ENCODE measurements at regions of chr4 and their contacts with region 1.

Region 1: GRCh38 chr4:44553143-44553542 is 98.3 kb downstream of the YIPF7 start:
- DNase-seq: no peak
- ATAC-seq: no peak
- H3K4me3 Mint-ChIP-seq: no peak overlapping the region
- H3K27ac Mint-ChIP-seq: no peak overlapping the region
- H3K4me1 Mint-ChIP-seq: no peaks in the 10 kb centered on the region
- H3K27me3 Mint-ChIP-seq: no peaks in the 10 kb centered on the region
- CTCF ChIP-seq: no peak

Region 2: DNA sequence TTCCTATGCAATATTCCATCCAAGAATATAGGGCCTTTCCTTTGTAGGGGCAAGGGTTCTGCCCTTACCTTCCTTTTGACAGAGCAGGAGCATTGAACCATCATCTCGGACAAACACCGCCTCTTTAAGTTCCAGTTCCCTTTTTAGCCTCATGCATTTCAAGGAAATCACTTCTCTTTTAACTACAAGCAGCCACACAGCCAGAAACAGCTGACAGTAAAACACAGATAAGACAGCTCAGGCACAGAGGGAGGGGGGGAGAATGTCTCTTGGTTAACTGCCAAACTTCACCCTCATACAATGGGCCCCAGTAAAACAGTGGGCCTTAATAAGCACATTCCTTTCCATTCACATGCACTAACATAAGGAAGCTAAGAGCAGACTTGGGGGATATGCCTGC is 922.4 kb after region 1 on chr4:
- CTCF ChIA-PET with region 1: no interaction called
- POLR2A ChIA-PET with region 1: no interaction called
- intact Hi-C with region 1: loop called (anchors 5 kb)
- DNase-seq: no peak
- ATAC-seq: no peak
- H3K4me3 Mint-ChIP-seq: no peak overlapping the region
- H3K27ac Mint-ChIP-seq: no peak overlapping the region
- H3K4me1 Mint-ChIP-seq: no peaks in the 10 kb centered on the region
- H3K27me3 Mint-ChIP-seq: no peaks in the 10 kb centered on the region
- CTCF ChIP-seq: no peak